Aorta (tissue), 5 donors: ENCODE measurements at regions of chr2 and their contacts with region 1.

Region 1: GRCh38 chr2:202375609-202376408 is at the start of gene BMPR2:
- DNase-seq: peak; percentile 91 to 96
- ATAC-seq: peak; percentile 93
- H3K4me3 ChIP-seq: peak within 1 kb of the TSS; percentile 93 to 94
- H3K27ac ChIP-seq: peak within 1 kb of the TSS; percentile 99 to 100
- H3K4me1 ChIP-seq: no peaks in the 10 kb centered on the region
- H3K27me3 ChIP-seq: no peaks in the 10 kb centered on the region
- total RNA-seq, gene BMPR2: 103 to 123 TPM

Region 2: DNA sequence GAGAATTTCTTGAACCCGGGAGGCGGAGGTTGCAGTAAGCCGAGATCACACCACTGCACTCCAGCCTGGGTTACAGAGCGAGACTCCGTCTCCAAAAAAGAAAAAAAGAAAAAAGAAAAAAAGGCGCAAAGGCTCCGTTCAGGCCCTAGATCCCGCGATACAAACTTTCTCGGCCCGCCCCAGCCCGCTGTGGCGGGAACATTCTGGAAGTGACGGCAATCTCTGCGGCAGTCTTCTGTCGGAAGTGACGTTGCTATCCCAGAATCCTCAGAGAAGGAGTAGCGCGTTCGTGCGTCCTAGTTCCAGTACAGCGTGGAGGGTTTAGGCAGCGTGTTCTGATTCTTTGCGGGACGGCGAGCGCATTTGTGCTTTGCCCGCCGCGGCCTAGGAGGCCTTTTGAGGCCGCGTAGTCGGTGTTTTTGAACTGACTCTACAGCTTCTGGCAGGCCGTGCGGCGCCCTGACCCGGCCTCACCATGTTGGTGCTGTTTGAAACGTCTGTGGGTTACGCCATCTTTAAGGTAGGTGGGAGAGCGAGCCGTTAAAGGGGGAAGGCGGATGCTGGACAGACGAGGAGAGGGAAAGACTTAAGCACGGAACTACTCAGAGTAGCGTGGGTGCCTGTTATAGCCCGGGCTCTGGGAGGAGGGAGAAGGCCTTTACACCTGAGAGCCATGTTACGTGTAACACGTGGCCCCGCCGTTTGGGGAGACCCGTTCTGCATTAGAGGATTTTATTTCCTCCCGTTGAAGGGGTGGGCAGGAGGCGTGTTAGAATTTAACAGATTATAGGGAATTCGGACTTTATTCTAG is 110.1 kb before region 1 on chr2 and contains the start of gene NOP58:
- intact Hi-C with region 1: loop called in 1 of 2 experiments (anchors 10 kb)
- DNase-seq: peak; percentile 95
- ATAC-seq: peak; percentile 99
- H3K4me3 ChIP-seq: peak within 1 kb of the TSS; percentile 84 to 94
- H3K27ac ChIP-seq: peak within 1 kb of the TSS; percentile 59 to 63
- H3K4me1 ChIP-seq: no peaks in the 10 kb centered on the region
- H3K27me3 ChIP-seq: no peaks in the 10 kb centered on the region
- total RNA-seq, gene NOP58: 42.4 to 49.2 TPM

Region 3: GRCh38 chr2:202429164-202429980 is 53.6 kb after region 1 on chr2:
- intact Hi-C with region 1: loop called (anchors 5 kb)
- DNase-seq: no peak
- ATAC-seq: peak; percentile 64
- H3K4me3 ChIP-seq: no peak overlapping the region
- H3K27ac ChIP-seq: peak overlapping the region; percentile 98 to 99
- H3K4me1 ChIP-seq: peaks cover 3 to 17% of the 10 kb centered on the region in 2 donors
- H3K27me3 ChIP-seq: no peaks in the 10 kb centered on the region

Region 4: GRCh38 chr2:202450785-202451184 is 75.0 kb after region 1 on chr2:
- intact Hi-C with region 1: loop called in 1 of 2 experiments (anchors 2 kb)
- DNase-seq: no peak
- ATAC-seq: peak; percentile 22
- H3K4me3 ChIP-seq: no peak overlapping the region
- H3K27ac ChIP-seq: no peak overlapping the region
- H3K4me1 ChIP-seq: peaks cover 0 to 5% of the 10 kb centered on the region in 2 donors
- H3K27me3 ChIP-seq: no peaks in the 10 kb centered on the region

Region 5: GRCh38 chr2:202541137-202541536 is 165.3 kb after region 1 on chr2:
- intact Hi-C with region 1: loop called (anchors 2 to 10 kb)
- DNase-seq: no peak
- ATAC-seq: peak; percentile 66
- H3K4me3 ChIP-seq: no peak overlapping the region
- H3K27ac ChIP-seq: no peak overlapping the region
- H3K4me1 ChIP-seq: no peaks in the 10 kb centered on the region
- H3K27me3 ChIP-seq: no peaks in the 10 kb centered on the region

Region 6: DNA sequence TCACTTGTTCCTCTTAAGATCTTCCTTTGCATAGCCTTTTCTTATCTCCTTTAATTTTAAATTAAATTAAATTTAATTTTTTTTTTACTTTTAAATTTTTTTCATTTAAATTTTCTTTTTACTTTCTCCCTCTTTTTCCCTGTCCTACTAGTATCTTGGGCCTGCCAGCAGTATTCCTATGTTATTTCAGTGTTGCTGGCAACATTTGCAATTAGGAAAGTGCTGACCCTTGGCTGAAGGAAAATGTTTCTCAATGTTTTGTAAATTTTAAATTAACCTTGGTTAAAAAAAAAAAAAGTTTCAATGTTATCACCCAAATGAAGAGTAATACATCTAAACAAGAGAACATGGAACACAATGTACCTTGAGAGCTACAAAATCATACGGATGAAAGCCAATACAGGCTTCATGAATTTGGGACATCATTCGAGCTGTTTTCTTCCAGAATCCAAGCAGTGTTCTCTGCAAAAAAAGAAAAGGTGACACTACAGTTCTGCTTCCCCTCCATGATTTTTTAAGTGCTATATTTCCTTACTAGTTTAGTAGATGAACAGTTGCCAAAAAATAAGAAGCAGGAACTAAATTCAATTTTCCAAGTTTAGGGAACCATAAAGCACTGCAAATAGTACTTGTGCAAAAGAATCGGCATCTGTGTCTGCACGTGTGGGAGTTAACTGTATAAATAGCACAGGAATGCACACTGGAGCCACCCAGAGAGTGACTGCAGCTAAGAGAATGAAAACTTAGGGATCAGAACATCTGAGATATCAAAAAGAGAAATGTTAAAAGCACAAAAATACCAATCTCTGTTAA is 439.9 kb after region 1 on chr2:
- intact Hi-C with region 1: no loop called
- DNase-seq: no peak
- ATAC-seq: peak; percentile 79
- H3K4me3 ChIP-seq: peak overlapping the region in 1 of 2 donors; percentile 59
- H3K27ac ChIP-seq: peak overlapping the region in 1 of 2 donors; percentile 82
- H3K4me1 ChIP-seq: peaks cover 0 to 3% of the 10 kb centered on the region in 2 donors
- H3K27me3 ChIP-seq: no peaks in the 10 kb centered on the region